Transverse colon (tissue), 4 donors: ENCODE measurements at regions of chr3 and their contacts with region 1.

Region 1: DNA sequence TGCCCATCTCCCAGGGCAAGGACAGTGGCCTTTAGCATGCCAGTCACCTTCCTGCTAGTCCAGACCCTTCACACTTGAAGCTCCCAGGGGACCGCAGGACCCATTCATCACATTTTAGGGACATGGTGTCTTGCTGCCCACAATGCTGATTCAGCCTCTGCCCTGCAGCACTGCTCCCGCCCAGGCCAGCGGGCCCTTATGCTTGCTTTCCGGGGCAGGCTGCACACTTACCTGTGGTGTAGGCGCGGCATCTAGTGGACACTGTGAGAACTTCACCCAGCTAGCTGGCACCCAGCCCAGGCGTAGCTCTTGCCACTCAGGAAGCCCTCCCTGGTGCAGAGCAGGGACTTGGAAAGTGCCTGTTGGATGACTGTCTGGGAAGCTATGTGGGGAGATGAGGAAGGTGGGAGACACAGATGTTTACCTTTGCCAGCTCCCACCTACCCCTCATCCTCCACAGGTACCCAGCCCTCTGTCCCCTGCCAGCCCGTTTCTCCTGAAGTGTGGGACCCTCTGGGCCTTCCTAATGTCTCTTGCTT is 26.2 kb upstream of the NR2C2 start:
- DNase-seq: peak; percentile 88
- H3K4me3 ChIP-seq: no peak overlapping the region
- H3K27ac ChIP-seq: no peak overlapping the region
- H3K4me1 ChIP-seq: peaks cover 0 to 7% (median 0%) of the 10 kb centered on the region in 4 donors
- H3K27me3 ChIP-seq: no peaks in the 10 kb centered on the region
- CTCF ChIP-seq: peak; percentile 97 to 99 (median 99)
- EP300 ChIP-seq: no peak
- POLR2A ChIP-seq: no peak

Region 2: GRCh38 chr3:14565868-14566588 is 355.1 kb before region 1 on chr3:
- in situ Hi-C with region 1: no loop called
- intact Hi-C with region 1: no loop called
- DNase-seq: no peak
- H3K4me3 ChIP-seq: no peak overlapping the region
- H3K27ac ChIP-seq: no peak overlapping the region
- H3K4me1 ChIP-seq: no peaks in the 10 kb centered on the region
- H3K27me3 ChIP-seq: no peaks in the 10 kb centered on the region
- CTCF ChIP-seq: no peak
- EP300 ChIP-seq: no peak
- POLR2A ChIP-seq: no peak

Region 3: DNA sequence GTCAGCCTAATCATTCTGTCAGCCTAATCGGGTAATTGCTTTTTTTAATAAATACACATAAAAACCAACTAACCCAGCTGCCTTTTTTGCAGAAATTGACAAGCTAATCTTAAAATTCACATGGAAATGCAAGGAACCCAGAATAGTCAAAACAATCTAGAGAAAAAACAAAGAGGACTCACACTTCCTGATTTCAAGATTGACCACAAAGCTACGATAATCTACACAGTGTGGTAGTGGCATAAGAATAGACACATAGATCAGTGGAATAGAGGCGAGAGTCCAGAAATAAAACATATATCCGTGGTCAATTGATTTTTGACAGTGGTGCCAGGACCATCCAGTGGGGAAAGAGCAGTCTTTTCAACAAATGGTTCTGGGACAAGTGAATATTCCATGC is 248.6 kb before region 1 on chr3:
- in situ Hi-C with region 1: loop called (anchors 10 kb)
- intact Hi-C with region 1: loop called (anchors 5 kb)
- DNase-seq: no peak
- H3K4me3 ChIP-seq: no peak overlapping the region
- H3K27ac ChIP-seq: no peak overlapping the region
- H3K4me1 ChIP-seq: no peaks in the 10 kb centered on the region
- H3K27me3 ChIP-seq: no peaks in the 10 kb centered on the region
- CTCF ChIP-seq: no peak
- EP300 ChIP-seq: no peak
- POLR2A ChIP-seq: no peak

Region 4: GRCh38 chr3:14678015-14678503 is 243.1 kb before region 1 on chr3:
- in situ Hi-C with region 1: loop called (anchors 10 kb)
- intact Hi-C with region 1: loop called (anchors 5 kb)
- DNase-seq: no peak
- H3K4me3 ChIP-seq: no peak overlapping the region
- H3K27ac ChIP-seq: no peak overlapping the region
- H3K4me1 ChIP-seq: no peaks in the 10 kb centered on the region
- H3K27me3 ChIP-seq: no peaks in the 10 kb centered on the region
- CTCF ChIP-seq: no peak
- EP300 ChIP-seq: no peak
- POLR2A ChIP-seq: no peak

Region 5: DNA sequence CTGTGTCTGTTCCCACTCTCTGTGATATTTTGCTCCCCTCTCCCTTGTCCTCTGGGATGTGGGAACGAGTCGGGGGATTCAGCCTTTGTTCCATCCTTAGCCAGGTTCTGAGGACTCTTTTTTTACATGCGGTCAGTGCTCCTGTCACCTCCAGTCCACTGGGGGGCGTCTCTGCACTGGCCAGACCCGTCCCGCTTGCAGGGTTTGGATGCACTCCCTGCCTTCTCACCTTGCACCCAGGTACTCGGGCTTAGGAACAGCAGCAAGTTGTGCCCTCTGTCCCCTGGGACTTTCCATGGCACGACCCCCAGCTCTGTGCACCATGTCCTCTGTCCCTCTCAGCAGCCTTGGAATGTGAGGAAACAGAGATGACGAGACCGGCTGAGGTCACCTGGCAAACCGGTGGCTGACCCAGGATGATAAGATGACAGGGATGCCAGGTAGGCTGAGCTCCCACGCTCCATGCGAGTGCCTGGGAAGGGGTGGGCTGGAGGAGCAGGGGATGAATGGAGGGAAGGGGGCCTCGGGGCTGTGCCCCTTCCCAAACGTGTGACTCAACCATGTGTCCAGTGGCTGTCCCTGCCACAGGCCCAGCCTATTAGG is 129.7 kb before region 1 on chr3:
- in situ Hi-C with region 1: loop called in 3 of 4 experiments (anchors 10 kb)
- intact Hi-C with region 1: no loop called
- DNase-seq: peak; percentile 74
- H3K4me3 ChIP-seq: no peak overlapping the region
- H3K27ac ChIP-seq: no peak overlapping the region
- H3K4me1 ChIP-seq: no peaks in the 10 kb centered on the region
- H3K27me3 ChIP-seq: no peaks in the 10 kb centered on the region
- CTCF ChIP-seq: peak; percentile 54 to 75 (median 68)
- EP300 ChIP-seq: no peak
- POLR2A ChIP-seq: no peak

Region 6: DNA sequence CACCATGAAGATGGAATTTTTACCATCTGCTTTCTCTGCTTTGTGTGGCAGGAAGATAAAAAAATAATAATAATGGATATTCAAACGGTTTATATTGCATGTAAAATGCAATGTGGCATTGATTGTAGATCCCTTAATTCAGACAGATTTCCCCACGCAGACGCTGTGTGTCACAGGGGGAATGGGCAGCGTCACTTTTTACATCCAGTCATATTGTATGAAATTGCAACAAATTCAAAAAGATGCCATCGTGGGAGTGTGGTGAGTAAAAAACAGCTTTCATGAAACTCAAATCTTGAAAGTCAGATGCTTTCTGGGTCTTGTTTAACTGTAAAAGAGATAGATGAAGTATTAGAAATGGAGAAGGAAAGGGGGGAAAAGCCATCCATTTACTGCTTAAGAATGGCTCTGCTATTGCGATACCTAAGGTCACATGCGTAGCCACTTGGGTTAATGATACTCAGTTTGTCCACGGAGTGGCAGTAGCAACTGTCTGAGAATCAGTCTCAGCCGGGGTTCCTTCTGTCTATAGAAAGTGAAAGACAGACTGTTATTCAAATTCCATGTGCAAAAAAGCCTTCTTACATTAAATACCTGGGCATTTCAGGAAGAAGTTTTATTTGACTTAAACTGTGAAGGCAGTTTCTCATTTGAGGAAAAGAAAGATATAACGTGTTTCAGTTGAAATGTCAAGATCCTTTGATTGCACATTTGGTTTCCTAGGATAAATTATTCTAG is 708.9 kb after region 1 on chr3:
- in situ Hi-C with region 1: no loop called
- intact Hi-C with region 1: no loop called
- DNase-seq: peak; percentile 65
- H3K4me3 ChIP-seq: peak overlapping the region in 1 of 4 donors; percentile 26
- H3K27ac ChIP-seq: peak overlapping the region; percentile 24 to 61 (median 30)
- H3K4me1 ChIP-seq: peaks cover 0 to 24% (median 4%) of the 10 kb centered on the region in 4 donors
- H3K27me3 ChIP-seq: no peaks in the 10 kb centered on the region
- CTCF ChIP-seq: peak; percentile 59 to 83 (median 67)
- EP300 ChIP-seq: no peak
- POLR2A ChIP-seq: no peak